HAP-1 (cell line): ENCODE measurements at regions of chr20 and their contacts with region 1.

Region 1: DNA sequence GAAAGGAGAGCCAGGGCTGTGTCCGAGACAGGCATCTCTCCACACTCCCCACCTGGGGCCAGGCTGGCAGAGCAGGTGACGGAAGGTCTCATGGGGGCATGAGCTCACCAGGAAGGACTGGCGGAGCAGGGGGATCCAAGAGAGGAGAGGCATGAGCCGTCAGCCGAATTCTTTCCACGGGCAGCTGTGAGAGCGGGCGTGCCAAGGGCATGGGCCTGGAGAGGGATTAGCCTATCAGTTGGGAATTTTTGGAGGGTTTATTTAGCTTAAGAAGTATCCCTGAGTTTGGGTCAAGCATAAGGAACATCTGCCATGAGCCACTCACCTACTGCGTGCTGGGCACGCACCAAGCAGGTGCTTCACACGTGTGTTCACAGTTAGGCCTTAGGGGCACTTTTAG is 60.2 kb upstream of the ZNFX1 start:
- DNase-seq: no peak
- H3K4me3 ChIP-seq: no peak overlapping the region
- H3K4me1 ChIP-seq: no peaks in the 10 kb centered on the region
- H3K27me3 ChIP-seq: peaks cover 5% of the 10 kb centered on the region

Region 2: DNA sequence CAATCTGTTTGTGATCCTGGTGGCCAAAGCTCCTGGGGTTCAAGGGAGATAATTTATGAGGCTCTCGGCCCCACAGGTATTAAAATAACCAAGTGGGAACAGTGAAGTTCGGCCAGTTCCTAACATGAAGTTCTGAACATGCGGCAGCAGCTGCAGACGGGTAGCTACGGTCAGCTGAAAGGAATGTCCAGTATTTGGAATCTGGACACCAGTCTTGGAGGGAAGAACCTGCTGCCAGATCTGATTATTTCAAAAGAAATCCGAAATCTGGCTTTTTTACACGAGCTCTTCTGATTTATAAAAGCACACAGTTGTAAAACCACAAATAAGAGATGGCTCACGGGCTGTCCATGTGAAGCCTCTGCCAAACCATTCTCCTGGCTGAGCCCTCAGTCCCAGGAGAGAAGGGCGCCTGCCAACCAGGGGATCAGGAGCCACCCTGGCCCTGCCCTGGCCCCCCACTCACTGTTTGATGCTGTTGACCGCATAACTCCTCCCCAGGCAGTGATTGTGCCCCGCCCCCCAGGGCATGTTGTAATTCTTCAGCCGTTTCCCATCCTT is 172.6 kb after region 1 on chr20:
- in situ Hi-C with region 1: loop called (anchors 10 kb)
- DNase-seq: no peak
- H3K4me3 ChIP-seq: no peak overlapping the region
- H3K4me1 ChIP-seq: no peaks in the 10 kb centered on the region
- H3K27me3 ChIP-seq: peaks cover 41% of the 10 kb centered on the region

Region 3: DNA sequence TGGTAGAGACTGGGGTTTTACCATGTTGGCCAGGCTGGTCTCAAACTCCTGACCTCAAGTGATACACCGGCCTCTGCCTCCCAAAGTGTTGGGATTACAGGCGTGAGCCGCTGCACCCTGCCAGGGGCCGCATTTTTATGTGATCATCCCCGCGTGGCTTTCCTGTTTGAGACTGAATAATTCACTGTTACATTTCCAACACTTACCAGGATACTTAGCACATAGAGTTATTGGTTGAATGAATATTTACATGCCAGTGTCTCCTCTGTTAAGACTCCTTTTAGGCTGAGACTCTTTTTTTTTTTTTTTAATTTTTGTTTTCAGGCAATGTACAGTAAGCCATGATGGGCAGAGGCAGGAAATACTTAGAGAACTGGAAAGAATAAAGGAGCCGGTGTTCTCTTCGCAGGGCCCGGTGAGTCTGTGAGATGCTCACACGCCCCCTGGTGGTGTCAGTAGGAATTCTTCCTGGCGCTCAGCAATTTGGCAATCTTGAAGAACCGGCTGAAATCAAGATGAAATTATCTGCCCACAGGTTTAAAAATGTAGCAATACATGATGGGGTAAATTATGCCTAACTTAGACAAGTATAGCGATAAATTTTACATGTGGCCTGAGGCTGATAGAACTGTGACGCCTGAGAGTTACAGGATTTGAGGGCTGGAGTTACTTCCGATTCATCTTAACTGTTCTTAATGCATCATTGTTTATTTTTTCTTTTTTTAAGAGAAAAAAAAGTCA is 590.5 kb after region 1 on chr20:
- in situ Hi-C with region 1: loop called (anchors 10 kb)
- DNase-seq: peak; percentile 78 to 87
- H3K4me3 ChIP-seq: no peak overlapping the region
- H3K4me1 ChIP-seq: peaks cover 11% of the 10 kb centered on the region; the same call in 1 of the 2 replicates
- H3K27me3 ChIP-seq: no peaks in the 10 kb centered on the region

Region 4: GRCh38 chr20:50095476-50096078 is 757.5 kb after region 1 on chr20:
- in situ Hi-C with region 1: no loop called
- DNase-seq: no peak
- H3K4me3 ChIP-seq: no peak overlapping the region
- H3K4me1 ChIP-seq: peaks cover 19% of the 10 kb centered on the region
- H3K27me3 ChIP-seq: no peaks in the 10 kb centered on the region